ENCODE measurements at regions of chr6 and their contacts with region 1.

Region 1: GRCh38 chr6:13319891-13320564 is 8.3 kb downstream of the TBC1D7 start:
- DNase-seq: no peak
- H3K4me3 ChIP-seq: no peak overlapping the region
- H3K27ac ChIP-seq: no peak overlapping the region
- H3K4me1 ChIP-seq: no peaks in the 10 kb centered on the region
- H3K27me3 ChIP-seq: no peaks in the 10 kb centered on the region
- CTCF ChIP-seq: no peak

Region 2: DNA sequence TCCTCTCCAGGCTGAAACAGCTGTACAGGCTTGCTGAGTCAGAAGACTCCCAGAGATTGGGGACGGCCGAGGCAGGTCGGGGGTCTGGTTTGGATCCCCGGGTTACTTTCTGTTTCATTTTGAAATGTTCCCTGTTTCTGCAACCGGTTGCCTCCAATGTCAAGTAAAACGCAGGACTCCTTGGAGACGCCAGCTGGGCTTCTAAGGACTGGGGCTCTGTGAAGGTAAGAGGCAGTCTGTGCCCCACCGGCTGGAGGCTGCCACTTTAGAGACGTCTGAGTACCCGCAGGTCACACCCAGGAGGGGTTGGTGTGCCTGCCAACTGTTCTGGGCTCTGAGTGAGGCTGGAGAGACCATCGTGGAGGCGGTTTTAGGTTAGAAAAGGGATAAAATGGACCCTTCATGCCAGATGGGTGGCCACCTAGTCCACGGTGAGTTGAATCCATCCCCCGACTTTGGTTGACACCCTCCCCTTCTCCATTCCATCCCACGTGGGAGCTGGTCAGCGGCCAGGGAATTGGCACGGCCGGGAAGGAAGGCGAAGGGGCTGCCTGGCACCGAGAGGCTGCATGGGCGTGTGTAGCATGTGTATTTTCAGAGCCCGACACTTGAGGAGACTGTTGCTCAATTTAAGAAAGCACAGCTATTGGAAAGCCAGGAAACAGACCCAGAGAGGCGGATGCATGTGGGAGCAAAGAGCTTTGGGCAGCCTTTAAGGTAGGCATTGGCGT is 362.5 kb before region 1 on chr6:
- intact Hi-C with region 1: loop called (anchors 5 kb)
- DNase-seq: peak; percentile 77 to 90
- H3K4me3 ChIP-seq: peak overlapping the region; percentile 64 to 70
- H3K27ac ChIP-seq: peak overlapping the region; percentile 82 to 84
- H3K4me1 ChIP-seq: peaks cover 0 to 25% (median 5%) of the 10 kb centered on the region in 4 donors
- H3K27me3 ChIP-seq: no peaks in the 10 kb centered on the region
- CTCF ChIP-seq: no peak